KBM-7 (cell line): ENCODE measurements at regions of chr12 and their contacts with region 1.

Region 1: DNA sequence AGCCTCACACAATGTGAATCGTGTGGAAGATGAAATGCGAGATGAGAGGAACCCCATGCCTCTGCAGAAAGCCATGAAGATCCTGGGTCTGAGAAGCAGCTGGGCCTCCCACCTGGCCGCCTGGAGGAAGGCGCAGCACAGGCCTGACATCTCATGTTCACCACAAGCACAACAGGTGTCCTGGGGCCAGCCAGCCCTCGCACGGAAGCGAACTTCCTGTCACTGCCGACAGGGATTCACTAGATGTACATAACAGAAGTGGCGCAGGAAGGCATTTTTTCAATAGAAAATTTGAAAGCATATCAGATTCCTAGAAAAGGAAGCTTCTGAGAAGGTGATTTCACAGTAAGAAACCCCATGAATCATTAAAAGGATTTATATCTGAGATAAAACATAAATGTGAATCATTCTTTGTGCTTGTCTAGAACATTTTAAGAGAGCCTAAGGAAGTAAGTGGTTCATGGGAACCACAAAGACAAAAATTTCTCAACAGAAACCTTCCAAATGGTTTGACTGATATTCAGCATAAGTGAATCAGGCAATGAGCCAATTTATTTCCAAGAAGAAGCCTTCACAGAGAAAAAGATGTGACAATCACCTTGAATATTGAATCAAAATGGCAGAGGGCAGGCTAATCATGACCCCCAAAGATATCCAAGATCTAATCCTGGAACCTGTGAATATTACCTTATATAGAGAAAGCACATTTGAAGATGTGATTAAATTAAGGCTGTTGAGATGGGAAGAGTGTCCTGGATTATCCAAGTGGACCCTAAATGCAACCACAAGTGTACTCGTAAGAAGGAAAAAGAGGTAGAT is 311.9 kb downstream of the DUSP6 start:
- DNase-seq: peak; percentile 96

Region 2: GRCh38 chr12:89352492-89353187 is 312.3 kb after region 1 on chr12 and contains the start of gene DUSP6:
- in situ Hi-C with region 1: loop called (anchors 25 kb)
- DNase-seq: peak; percentile 99

Region 3: GRCh38 chr12:89461649-89462612 is 421.6 kb after region 1 on chr12:
- in situ Hi-C with region 1: loop called (anchors 25 kb)
- DNase-seq: peak; percentile 84